WTC11 (cell line): ENCODE measurements at regions of chr1 and their contacts with region 1.

Region 1: GRCh38 chr1:161792740-161793139 is 26.6 kb downstream of the ATF6 start:
- DNase-seq: no peak
- ATAC-seq: peak; percentile 46; the same call in 1 of the 2 replicates
- H3K4me3 Mint-ChIP-seq: no peak overlapping the region
- H3K27ac Mint-ChIP-seq: no peak overlapping the region
- H3K4me1 Mint-ChIP-seq: no peaks in the 10 kb centered on the region
- H3K27me3 Mint-ChIP-seq: no peaks in the 10 kb centered on the region
- CTCF ChIP-seq: peak; percentile 26; the same call in 1 of the 2 replicates

Region 2: GRCh38 chr1:161921990-161922389 is 129.2 kb after region 1 on chr1:
- CTCF ChIA-PET with region 1: no interaction called
- POLR2A ChIA-PET with region 1: no interaction called
- DNase-seq: no peak
- ATAC-seq: no peak
- H3K4me3 Mint-ChIP-seq: no peak overlapping the region
- H3K27ac Mint-ChIP-seq: no peak overlapping the region
- H3K4me1 Mint-ChIP-seq: no peaks in the 10 kb centered on the region
- H3K27me3 Mint-ChIP-seq: no peaks in the 10 kb centered on the region
- CTCF ChIP-seq: no peak

Region 3: DNA sequence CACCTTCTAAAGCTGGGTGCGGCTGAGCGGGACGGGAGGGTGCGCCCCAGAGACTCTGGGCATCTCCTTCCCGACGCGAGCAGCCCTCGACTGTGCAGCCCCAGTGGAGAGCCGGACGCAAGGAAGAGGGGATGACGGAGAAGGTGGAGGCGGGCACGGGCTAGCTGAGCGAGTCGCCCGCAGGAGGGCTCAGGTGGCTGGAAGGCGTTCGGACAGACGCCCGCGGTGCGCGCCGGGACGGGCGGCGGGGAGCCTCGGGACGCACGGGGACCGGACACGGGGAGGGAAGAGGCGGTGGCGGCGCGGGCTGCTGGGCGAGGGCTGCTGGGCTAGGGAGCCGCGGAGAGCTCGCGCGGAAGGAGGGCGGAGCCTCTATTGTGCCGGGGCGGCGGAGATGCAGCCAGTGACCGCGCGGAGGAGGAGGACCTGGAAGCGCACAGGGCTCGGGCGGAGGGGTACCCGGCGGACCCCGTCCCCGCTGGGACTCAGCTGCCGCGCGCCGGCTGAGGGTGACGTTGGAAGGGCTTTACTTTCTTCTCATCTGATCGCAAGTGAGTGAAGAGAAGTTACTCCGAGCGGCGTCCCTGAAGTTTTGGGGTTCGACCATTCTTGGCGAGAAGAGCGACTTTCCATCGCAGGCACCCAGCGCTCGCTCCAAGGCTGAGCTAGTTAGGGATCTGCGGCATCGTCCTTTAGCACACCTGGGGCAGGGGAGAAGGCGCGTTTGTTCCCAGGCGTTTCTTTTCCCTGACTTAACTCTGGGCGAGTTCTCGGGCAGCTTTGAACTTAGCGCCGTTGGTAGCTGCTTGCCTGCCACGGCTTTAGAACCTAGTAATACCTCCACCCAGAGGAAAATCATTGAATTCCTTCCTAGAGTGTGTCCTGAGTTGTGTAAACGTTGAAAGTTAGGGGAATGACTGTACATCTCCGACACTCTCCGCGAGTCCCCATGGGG is 231.1 kb after region 1 on chr1 and contains the start of gene OLFML2B:
- CTCF ChIA-PET with region 1: interaction called, 14 read pairs
- POLR2A ChIA-PET with region 1: no interaction called
- DNase-seq: peak; percentile 80
- ATAC-seq: peak; percentile 92
- H3K4me3 Mint-ChIP-seq: peak within 1 kb of the TSS; percentile 86
- H3K27ac Mint-ChIP-seq: no peak within 1 kb of the TSS
- H3K4me1 Mint-ChIP-seq: peaks cover 32% of the 10 kb centered on the region
- H3K27me3 Mint-ChIP-seq: peaks cover 65% of the 10 kb centered on the region
- CTCF ChIP-seq: no peak
- total RNA-seq, gene OLFML2B: 4.9 to 6.5 TPM (median 6.2 TPM) in 3 replicates